B cell (primary cell): ENCODE measurements at regions of chr10 and their contacts with region 1.

Region 1: DNA sequence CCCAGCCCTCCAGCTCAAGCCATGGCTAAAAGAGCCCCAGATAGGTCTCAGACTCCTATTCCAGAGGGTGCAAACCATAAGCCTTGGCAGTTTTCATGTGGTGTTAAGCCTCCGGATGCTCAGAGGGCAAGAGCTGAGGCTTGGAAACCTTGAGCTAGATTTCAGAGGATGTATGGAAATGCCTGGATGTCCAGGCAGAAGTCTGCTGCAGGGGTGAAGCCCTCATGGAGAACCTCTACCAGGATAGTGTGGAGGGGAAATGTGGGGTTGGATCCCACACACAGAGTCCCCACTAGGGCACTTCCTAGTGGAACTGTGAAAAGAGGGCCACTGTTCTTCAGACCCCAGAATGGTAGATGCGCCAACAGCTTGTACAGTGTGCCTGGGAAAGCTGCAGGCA is 13.2 kb upstream of the HPSE2 start:
- DNase-seq: no peak
- ATAC-seq: no peak
- H3K4me3 ChIP-seq: no peak overlapping the region
- H3K4me3 Mint-ChIP-seq: no peak overlapping the region
- H3K27ac ChIP-seq: no peak overlapping the region
- H3K27ac Mint-ChIP-seq: no peak overlapping the region
- H3K4me1 ChIP-seq: no peaks in the 10 kb centered on the region
- H3K4me1 Mint-ChIP-seq: no peaks in the 10 kb centered on the region
- H3K27me3 ChIP-seq: peaks cover 0 to 6% (median 2%) of the 10 kb centered on the region in 4 experiments
- H3K27me3 Mint-ChIP-seq: peaks cover 14% of the 10 kb centered on the region
- CTCF ChIP-seq: no peak

Region 2: DNA sequence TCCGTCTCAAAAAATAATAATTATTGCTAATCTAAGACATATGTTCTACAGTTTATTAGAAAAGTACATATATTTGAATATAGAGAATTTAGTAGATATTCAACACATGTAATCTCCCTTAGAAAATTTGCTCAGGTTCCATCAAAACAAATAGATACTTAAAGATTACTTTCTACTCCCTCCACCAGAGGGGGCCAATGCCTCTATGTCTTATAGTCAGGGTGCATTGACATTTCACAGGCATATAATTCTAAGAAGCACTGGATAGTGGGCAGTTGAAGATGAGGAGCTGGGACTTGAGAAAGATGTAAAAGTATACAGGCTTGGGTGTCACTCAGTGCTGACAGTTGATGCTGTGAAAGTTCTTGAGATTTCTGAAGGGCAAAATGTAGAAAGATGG is 500.5 kb before region 1 on chr10:
- CTCF ChIA-PET with region 1: interaction called, 13 read pairs
- POLR2A ChIA-PET with region 1: no interaction called
- intact Hi-C with region 1: no loop called
- DNase-seq: peak; percentile 17
- ATAC-seq: no peak
- H3K4me3 ChIP-seq: no peak overlapping the region
- H3K4me3 Mint-ChIP-seq: no peak overlapping the region
- H3K27ac ChIP-seq: no peak overlapping the region
- H3K27ac Mint-ChIP-seq: no peak overlapping the region
- H3K4me1 ChIP-seq: no peaks in the 10 kb centered on the region
- H3K4me1 Mint-ChIP-seq: no peaks in the 10 kb centered on the region
- H3K27me3 ChIP-seq: peaks cover 0 to 5% (median 0%) of the 10 kb centered on the region in 4 experiments
- H3K27me3 Mint-ChIP-seq: peaks cover 18% of the 10 kb centered on the region
- CTCF ChIP-seq: peak; percentile 57

Region 3: GRCh38 chr10:98790802-98791201 is 458.0 kb before region 1 on chr10:
- CTCF ChIA-PET with region 1: interaction called, 6 read pairs
- POLR2A ChIA-PET with region 1: no interaction called
- intact Hi-C with region 1: loop called (anchors 5 kb)
- DNase-seq: no peak
- ATAC-seq: no peak
- H3K4me3 ChIP-seq: no peak overlapping the region
- H3K4me3 Mint-ChIP-seq: no peak overlapping the region
- H3K27ac ChIP-seq: no peak overlapping the region
- H3K27ac Mint-ChIP-seq: no peak overlapping the region
- H3K4me1 ChIP-seq: no peaks in the 10 kb centered on the region
- H3K4me1 Mint-ChIP-seq: no peaks in the 10 kb centered on the region
- H3K27me3 ChIP-seq: peaks cover 0 to 9% (median 2%) of the 10 kb centered on the region in 4 experiments
- H3K27me3 Mint-ChIP-seq: peaks cover 32% of the 10 kb centered on the region
- CTCF ChIP-seq: no peak